ENCODE measurements at regions of chr19 and their contacts with region 1.

Region 1: GRCh38 chr19:38335949-38336637 is 463 bp downstream of the CATSPERG start:
- DNase-seq: peak; percentile 87 to 95
- H3K4me3 ChIP-seq: peak overlapping the region; percentile 73
- H3K27ac ChIP-seq: peak overlapping the region; percentile 69
- H3K4me1 ChIP-seq: peaks cover 5% of the 10 kb centered on the region
- H3K27me3 ChIP-seq: no peaks in the 10 kb centered on the region
- CTCF ChIP-seq: no peak

Region 2: GRCh38 chr19:38183251-38183897 is 152.7 kb before region 1 on chr19:
- CTCF ChIA-PET with region 1: no interaction called
- POLR2A ChIA-PET with region 1: no interaction called
- intact Hi-C with region 1: no loop called
- DNase-seq: no peak
- H3K4me3 ChIP-seq: no peak overlapping the region
- H3K27ac ChIP-seq: no peak overlapping the region
- H3K4me1 ChIP-seq: no peaks in the 10 kb centered on the region
- H3K27me3 ChIP-seq: no peaks in the 10 kb centered on the region
- CTCF ChIP-seq: no peak

Region 3: DNA sequence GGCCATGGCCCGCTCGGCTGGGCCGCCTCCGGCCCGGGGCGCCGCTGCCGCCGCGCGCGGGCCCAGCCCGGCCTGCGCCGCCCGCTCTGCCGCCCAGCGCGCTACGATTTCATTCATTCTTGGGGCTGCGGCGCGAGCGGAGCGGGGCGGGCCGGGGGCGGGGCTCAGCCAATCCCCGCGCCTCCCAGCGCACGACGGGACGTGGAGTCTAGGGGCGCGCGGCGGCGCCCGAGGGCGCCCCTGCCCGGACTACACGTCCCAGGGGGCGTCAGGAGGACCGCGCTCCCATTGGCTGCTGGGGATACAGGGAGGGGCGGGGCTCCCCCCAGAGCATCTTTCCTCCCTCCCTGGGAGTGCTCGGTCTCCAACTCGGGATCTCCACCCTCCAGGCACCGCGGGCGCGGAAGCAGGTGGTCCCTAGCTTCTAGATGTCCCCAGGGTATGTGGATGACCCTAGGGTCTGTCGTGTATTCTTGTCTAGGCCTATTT is 106.5 kb before region 1 on chr19:
- CTCF ChIA-PET with region 1: interaction called, 6 read pairs
- POLR2A ChIA-PET with region 1: no interaction called
- intact Hi-C with region 1: loop called (anchors 1 kb)
- DNase-seq: peak in 1 of 2 experiments; percentile 56
- H3K4me3 ChIP-seq: no peak overlapping the region
- H3K27ac ChIP-seq: no peak overlapping the region
- H3K4me1 ChIP-seq: 0 out of 2 replicates have a peak, but pooled peaks cover 6% of the 10 kb centered on the region
- H3K27me3 ChIP-seq: peaks cover 14% of the 10 kb centered on the region; the same call in 1 of the 2 replicates
- CTCF ChIP-seq: no peak

Region 4: DNA sequence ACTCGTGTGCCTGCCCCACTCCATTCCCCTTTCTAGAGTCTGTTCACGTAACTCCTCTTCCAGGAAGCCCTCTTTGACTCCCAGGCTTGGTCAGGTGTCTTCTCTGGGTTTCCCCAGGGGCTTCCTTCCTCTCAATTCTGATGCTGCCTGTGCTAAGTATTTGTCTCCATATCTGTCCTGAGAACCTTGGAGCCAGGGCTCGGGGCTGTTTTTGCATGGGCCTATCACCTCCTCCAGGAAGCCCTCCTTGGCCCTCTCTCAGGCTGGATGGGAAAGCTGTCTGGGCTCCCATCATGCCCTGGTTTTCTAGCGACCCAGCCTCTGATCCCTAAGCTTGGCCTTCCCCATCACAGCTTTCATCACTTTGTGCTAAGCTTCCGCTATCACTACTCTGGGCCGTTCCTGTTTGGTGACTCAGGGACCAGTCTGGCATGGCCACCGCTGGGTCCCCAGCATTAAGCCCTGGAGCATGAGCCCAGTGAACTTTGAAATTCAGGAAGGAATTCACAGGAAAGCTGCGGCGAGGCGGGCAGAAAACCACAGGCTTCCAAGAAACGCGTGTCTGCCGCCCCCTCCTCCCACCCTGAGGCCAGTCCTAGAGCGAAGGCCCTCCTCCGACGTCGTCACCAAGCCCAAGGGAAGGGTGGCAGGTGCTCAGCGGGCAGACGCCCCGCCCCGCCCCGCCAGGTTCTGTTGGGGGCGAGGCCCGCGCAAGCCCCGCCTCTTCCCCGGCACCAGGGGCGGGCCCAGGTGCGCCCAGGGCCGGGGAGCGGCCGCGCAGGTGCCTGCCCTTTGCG is 72.2 kb before region 1 on chr19:
- CTCF ChIA-PET with region 1: no interaction called
- POLR2A ChIA-PET with region 1: interaction called, 15 read pairs
- intact Hi-C with region 1: loop called (anchors 1 kb)
- DNase-seq: peak; percentile 97 to 99
- H3K4me3 ChIP-seq: peak overlapping the region; percentile 34; the same call in 1 of the 2 replicates
- H3K27ac ChIP-seq: peak overlapping the region; percentile 94
- H3K4me1 ChIP-seq: peaks cover 35% of the 10 kb centered on the region
- H3K27me3 ChIP-seq: no peaks in the 10 kb centered on the region
- CTCF ChIP-seq: no peak

Region 5: DNA sequence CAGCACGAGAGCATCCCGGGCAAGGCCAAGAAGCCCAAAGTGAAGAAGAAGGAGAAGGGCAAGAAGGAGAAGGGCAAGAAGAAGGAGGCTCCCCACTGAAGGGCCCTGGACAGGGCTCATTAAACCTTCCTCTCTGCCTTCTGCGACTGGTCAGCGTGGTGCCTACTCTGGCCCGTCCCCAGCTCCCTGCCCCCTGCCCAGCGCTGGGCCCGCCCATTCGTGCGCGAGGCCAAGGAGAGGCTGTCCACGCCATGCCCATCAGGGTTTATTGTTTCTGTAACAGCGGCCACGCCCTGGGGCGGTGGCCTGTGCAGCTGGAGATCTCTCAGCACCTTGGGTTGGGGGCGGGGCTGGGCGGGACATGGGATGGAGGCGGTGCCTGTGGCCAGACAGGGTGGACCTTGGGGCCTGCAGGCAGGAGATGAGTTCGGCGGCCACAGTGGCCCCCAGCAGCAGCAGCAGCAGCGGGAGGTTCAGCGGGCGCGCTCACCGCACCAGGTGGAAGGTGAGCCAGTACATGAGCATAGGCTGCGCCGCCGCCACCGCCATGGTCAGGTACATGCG is 31.1 kb before region 1 on chr19:
- CTCF ChIA-PET with region 1: no interaction called
- POLR2A ChIA-PET with region 1: no interaction called
- intact Hi-C with region 1: loop called (anchors 1 kb)
- DNase-seq: peak; percentile 95 to 98
- H3K4me3 ChIP-seq: peak overlapping the region; percentile 72
- H3K27ac ChIP-seq: peak overlapping the region; percentile 94
- H3K4me1 ChIP-seq: peaks cover 33% of the 10 kb centered on the region
- H3K27me3 ChIP-seq: no peaks in the 10 kb centered on the region
- CTCF ChIP-seq: no peak

Region 6: DNA sequence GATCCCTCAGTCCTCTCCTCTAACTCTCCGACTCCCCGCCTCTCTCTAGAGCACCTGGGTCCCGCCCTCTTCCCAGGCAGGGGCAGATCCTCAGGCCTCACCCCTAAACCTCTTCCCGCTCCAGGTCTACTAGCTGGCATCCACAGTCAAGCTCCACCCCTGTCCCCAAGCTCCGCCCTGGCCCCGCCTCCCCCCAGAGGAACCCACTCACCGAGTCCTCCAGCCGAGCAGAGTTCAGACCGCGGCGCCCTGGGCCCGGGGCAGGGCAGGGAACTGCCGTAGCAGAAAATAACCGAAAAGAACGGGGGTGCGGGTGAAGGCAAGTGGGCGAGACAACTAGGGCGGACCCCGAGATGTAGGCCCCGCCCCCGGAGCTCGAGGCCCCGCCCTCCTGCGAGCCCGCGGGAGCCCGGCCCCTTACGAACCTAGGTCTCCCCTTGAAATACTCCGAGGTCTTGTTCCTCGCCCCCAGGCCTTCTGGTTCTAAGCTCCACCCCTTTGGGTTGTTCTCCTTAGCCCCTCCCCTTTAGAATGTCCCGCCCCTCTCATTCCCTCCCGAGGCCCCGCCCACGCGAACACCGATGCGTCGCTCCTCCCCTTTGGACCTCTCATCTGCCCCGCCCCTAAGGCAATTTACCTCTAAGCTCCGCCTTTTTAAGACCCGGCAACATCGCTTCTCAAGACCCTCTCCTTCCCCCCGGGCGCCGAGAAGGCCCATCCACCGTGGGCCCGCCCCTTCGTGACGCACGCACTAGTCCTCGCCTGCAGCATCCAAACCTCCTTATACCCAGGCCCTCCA is 51.7 kb after region 1 on chr19 and contains the start of gene GGN:
- CTCF ChIA-PET with region 1: no interaction called
- POLR2A ChIA-PET with region 1: no interaction called
- intact Hi-C with region 1: loop called (anchors 1 kb)
- DNase-seq: peak; percentile 81 to 93
- H3K4me3 ChIP-seq: peak within 1 kb of the TSS; percentile 71
- H3K27ac ChIP-seq: peak within 1 kb of the TSS; percentile 36; the same call in 1 of the 2 replicates
- H3K4me1 ChIP-seq: peaks cover 8% of the 10 kb centered on the region; the same call in 1 of the 2 replicates
- H3K27me3 ChIP-seq: no peaks in the 10 kb centered on the region
- CTCF ChIP-seq: no peak
- total RNA-seq, gene GGN: 1.0 and 2.1 TPM in 2 replicates

Measured in PC-9 (cell line).